ENCODE measurements at regions of chr3 and their contacts with region 1.

Region 1: DNA sequence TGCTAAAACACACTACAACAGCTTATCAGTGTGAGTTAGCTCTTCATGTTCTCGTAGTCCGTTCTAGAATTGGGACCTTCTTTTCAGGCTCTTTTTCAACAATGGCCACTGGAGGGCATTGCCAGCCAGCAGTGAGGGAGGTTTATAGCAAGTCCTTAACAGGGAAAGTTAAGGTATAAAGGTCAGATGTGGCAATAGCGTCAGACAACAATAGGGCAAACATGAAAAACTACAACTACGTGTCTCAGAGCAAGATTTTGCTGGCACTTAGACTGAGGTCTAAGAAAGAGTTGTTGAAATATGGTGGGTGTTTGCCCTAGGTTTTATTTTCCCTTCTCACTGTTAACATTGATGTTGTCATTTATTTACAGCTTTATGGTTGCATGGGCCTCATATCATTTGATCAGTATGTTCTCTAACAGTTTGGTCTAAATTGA is 161.4 kb downstream of the GMNC start:
- DNase-seq: no peak
- H3K4me3 ChIP-seq: no peak overlapping the region
- CTCF ChIP-seq: peak; percentile 58

Region 2: DNA sequence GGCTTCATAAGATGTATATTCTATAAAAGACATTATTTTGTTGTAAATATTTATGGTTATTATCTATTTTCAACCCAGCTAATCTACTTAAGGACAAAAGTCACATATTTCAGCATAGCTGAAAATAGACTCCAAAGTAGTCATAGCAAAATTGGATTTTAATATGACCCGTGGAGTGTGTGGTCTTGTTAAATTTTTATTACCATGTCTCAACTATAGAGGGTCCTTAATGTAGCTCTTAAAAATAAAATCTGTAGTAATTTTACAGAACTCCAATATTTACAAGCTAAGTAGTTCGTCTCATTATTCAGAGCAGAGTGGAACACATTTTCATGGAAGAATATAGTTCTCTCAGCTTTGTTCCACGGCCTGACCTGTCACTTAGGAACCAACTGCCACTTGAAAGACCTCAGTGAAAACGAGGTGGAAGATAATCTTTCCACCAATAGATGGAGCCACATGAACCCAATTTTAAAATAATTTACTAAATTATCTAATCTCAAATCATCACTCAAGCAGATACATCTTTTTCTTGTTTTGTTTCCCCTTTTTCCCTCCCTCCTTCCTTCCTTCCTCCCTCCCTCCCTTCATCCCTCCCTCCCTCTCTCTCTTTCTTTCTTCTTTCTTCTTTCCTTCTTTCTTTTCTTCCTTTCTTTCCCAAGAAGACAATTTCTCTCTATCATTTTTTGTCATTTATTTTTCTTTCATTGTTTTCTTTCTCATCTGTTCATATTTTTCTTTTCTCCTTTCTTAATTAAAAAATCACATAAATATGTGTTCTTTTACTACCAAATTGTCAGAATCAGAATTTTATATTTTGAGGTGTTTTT is 476.0 kb before region 1 on chr3:
- CTCF ChIA-PET with region 1: interaction called, 30 read pairs
- POLR2A ChIA-PET with region 1: no interaction called
- DNase-seq: no peak
- H3K4me3 ChIP-seq: no peak overlapping the region
- CTCF ChIP-seq: peak; percentile 12

Region 3: GRCh38 chr3:190513409-190514162 is 187.5 kb before region 1 on chr3 and contains the start of gene IL1RAP:
- CTCF ChIA-PET with region 1: interaction called, 38 read pairs
- POLR2A ChIA-PET with region 1: no interaction called
- DNase-seq: peak; percentile 55
- H3K4me3 ChIP-seq: peak within 1 kb of the TSS; percentile 87
- CTCF ChIP-seq: peak; percentile 20

Region 4: DNA sequence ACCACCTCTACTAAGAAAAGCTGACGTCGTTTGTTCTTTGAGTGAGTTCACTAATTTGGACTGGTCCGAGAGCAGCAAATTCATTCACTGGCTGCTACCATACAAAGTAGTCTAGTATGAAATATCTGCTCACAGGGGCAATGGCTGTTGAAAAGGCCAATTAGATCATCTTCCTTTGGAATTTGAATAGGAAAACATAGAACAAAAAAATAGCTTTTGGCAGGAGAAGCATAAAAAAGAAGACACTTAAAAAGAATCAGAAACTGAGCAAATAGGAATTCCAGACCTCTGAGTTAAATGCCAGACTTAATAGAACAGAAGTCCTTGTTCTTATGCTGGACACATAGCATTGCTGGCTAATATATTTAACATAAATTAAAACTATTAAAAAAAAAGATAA is 28.0 kb before region 1 on chr3:
- CTCF ChIA-PET with region 1: interaction called, 11 read pairs
- POLR2A ChIA-PET with region 1: no interaction called
- DNase-seq: peak; percentile 19
- H3K4me3 ChIP-seq: no peak overlapping the region
- CTCF ChIP-seq: no peak

Region 5: DNA sequence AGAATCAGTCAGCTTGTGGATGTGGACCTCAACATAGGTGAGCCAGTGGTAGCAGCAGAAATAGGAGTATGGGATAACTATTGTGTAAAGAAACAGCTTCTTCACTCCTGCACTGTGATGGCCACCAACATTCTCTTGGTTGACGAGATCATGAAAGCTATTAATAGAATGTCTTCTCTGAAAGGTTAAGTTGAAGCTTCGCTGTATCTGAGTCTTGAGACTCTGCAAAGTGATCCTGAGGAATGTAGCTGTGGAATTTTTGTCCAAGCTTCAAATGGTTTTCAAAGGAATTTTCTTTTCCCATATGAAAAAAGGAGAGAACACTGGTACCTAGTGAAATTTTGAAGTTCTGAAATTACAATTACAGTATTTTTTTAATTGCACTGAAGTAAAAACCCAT is 15.1 kb after region 1 on chr3:
- CTCF ChIA-PET with region 1: interaction called, 19 read pairs
- POLR2A ChIA-PET with region 1: no interaction called
- DNase-seq: no peak
- H3K4me3 ChIP-seq: no peak overlapping the region
- CTCF ChIP-seq: no peak